ENCODE measurements at regions of chr6 and their contacts with region 1.

Region 1: DNA sequence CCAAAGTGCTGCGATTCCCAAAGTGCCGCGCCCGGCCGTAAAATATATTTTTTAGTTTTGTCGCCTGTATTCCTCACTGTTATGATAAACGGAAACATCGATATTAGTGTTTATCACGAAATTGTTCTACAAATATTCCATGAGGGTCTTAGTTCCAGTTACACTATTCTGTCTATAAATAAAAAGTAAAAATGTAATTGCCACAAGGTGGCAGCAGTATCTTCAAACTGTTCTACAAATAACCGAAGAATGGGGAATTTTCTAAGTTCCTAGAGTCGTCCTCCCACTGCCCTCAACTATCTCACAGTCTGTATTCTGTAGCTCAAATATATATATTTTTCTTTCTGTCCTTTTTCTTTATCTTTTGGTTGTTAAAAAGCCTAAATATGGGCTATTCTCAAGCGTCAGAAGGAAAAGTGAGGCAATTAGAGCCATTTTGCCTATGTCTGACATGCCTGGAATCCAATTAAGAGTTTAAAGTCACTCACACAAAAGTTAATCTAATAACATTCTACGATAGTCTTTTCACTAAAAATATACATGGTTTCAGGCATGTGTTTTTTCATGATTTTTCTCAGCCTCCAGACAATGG is 14.2 kb upstream of the FAM162B start:
- DNase-seq: no peak
- H3K4me3 ChIP-seq: no peak overlapping the region
- H3K27ac ChIP-seq: no peak overlapping the region
- H3K4me1 ChIP-seq: no peaks in the 10 kb centered on the region
- H3K27me3 ChIP-seq: no peaks in the 10 kb centered on the region
- CTCF ChIP-seq: peak; percentile 31 to 42

Region 2: DNA sequence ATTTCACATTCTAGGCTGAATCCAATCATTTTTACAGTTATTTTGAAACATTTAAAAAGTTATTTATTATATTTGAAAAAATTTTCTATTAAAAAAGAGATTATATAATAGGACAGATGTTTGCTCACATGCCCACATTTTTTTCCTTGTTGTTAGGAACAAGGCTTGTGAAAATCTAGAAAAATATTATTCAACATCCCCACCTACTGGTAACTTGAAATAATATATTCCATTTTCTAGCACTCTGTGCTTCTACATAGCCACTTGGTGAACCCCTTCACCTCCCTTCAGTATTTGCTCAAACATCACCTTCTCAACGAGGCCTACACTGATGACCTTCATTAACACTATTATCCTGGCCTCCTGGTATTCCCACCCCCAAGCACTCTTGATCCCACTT is 67.6 kb after region 1 on chr6:
- CTCF ChIA-PET with region 1: no interaction called
- dilution Hi-C with region 1: no loop called
- in situ Hi-C with region 1: no loop called
- intact Hi-C with region 1: loop called (anchors 1 kb)
- DNase-seq: peak; percentile 24
- H3K4me3 ChIP-seq: no peak overlapping the region
- H3K27ac ChIP-seq: no peak overlapping the region
- H3K4me1 ChIP-seq: no peaks in the 10 kb centered on the region
- H3K27me3 ChIP-seq: peaks cover 2% of the 10 kb centered on the region
- CTCF ChIP-seq: peak; percentile 6 to 31

Region 3: GRCh38 chr6:116969211-116969863 is 189.7 kb after region 1 on chr6:
- CTCF ChIA-PET with region 1: no interaction called
- dilution Hi-C with region 1: no loop called
- in situ Hi-C with region 1: no loop called
- intact Hi-C with region 1: loop called (anchors 2 kb)
- DNase-seq: peak; percentile 25
- H3K4me3 ChIP-seq: no peak overlapping the region
- H3K27ac ChIP-seq: no peak overlapping the region
- H3K4me1 ChIP-seq: no peaks in the 10 kb centered on the region
- H3K27me3 ChIP-seq: peaks cover 4% of the 10 kb centered on the region
- CTCF ChIP-seq: peak; percentile 75 to 80

Region 4: GRCh38 chr6:117451671-117452070 is 672.0 kb after region 1 on chr6:
- CTCF ChIA-PET with region 1: no interaction called
- dilution Hi-C with region 1: no loop called
- in situ Hi-C with region 1: no loop called
- intact Hi-C with region 1: no loop called
- DNase-seq: no peak
- H3K4me3 ChIP-seq: no peak overlapping the region
- H3K27ac ChIP-seq: no peak overlapping the region
- H3K4me1 ChIP-seq: peaks cover 37% of the 10 kb centered on the region
- H3K27me3 ChIP-seq: no peaks in the 10 kb centered on the region
- CTCF ChIP-seq: no peak

Region 5: GRCh38 chr6:117829594-117830319 is 1050.1 kb after region 1 on chr6:
- CTCF ChIA-PET with region 1: no interaction called
- dilution Hi-C with region 1: no loop called
- in situ Hi-C with region 1: no loop called
- intact Hi-C with region 1: loop called (anchors 10 kb)
- DNase-seq: peak; percentile 33
- H3K4me3 ChIP-seq: peak overlapping the region; percentile 42 to 55 (median 48)
- H3K27ac ChIP-seq: no peak overlapping the region
- H3K4me1 ChIP-seq: no peaks in the 10 kb centered on the region
- H3K27me3 ChIP-seq: no peaks in the 10 kb centered on the region
- CTCF ChIP-seq: peak; percentile 27 to 69

Measured in mammary epithelial cell (primary cell).